ENCODE measurements at regions of chr19 and their contacts with region 1.

Region 1: DNA sequence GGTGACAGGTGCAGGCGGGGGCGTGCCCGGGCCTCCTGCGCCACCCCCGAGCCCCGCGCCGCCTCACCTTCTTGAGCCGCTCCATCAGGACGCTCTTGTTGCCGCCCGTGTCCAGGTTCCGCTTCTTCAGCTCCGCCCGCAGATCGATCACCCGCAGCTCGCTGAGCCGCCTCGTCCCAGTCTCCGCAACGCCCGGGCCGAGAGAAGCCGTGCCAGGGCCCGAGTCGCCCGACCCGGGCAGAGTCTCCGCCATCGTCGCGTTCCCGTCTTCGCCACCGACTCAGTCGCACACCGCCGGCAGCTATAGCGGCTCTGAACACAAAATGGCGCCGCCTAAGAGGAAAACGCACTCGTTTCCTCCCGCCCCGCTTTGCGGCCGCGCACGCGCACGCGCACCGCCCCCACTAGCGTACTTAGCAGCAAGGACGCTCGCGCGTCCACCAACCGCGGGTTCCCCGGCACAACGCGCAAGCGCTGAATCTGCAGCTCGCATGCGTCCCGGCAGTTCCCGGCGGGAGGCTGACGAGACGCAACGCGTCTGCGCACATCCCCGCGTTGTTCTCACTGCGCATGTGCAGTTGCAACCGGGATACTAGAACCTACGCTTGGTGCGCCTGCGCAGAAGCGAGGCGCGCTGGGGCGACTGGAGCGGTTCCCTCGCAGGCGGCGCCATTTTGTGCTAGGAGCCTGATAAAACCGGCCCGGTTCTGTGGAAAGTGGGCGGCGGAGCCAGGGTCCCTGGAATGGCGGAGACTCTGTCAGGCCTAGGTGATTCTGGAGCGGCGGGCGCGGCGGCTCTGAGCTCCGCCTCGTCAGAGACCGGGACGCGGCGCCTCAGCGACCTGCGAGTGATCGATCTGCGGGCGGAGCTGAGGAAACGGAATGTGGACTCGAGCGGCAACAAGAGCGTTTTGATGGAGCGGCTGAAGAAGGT is at the starts of genes SAFB and SAFB2:
- DNase-seq: peak; percentile 100
- H3K4me3 ChIP-seq: peak within 1 kb of the TSS; percentile 95
- H3K27ac ChIP-seq: peak within 1 kb of the TSS; percentile 80
- H3K4me1 ChIP-seq: peaks cover 52% of the 10 kb centered on the region
- CTCF ChIP-seq: no peak
- total RNA-seq, gene SAFB: 68.9 and 79.4 TPM in 2 replicates
- total RNA-seq, gene SAFB2: 51.7 and 52.8 TPM in 2 replicates

Region 2: GRCh38 chr19:5503598-5503997 is 119.1 kb before region 1 on chr19:
- CTCF ChIA-PET with region 1: no interaction called
- POLR2A ChIA-PET with region 1: no interaction called
- intact Hi-C with region 1: no loop called
- DNase-seq: no peak
- H3K4me3 ChIP-seq: no peak overlapping the region
- H3K27ac ChIP-seq: no peak overlapping the region
- H3K4me1 ChIP-seq: no peaks in the 10 kb centered on the region
- CTCF ChIP-seq: peak; percentile 35; the same call in 1 of the 2 replicates

Region 3: DNA sequence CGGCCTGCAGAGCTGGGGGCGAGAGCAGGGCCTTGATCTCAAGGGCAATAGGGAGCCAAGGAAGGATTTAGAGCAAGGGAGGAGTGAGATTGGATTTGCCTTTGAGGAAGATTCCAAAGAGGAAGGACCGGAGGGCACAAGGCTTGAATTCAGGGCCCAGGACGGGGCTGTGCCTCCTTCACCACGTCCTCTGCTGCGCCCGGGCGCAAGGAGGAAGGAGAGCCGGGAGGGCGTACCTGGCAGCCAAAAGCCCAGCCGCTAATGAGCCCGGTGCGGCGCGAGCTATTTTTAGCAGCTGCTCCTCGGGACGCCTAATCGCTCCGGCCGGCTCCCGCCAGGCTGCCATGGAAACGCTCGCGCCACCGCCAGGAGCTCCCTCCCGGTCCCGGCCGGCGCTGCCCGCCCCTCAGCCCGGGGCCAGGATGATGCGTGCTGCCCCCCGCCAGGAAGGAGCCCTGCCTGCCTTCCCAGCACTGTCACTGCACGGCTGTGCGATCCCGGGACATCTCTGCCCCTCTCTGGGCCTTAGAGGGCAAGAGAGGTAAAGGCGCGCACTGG is 86.3 kb before region 1 on chr19:
- CTCF ChIA-PET with region 1: no interaction called
- POLR2A ChIA-PET with region 1: no interaction called
- intact Hi-C with region 1: no loop called
- DNase-seq: no peak
- H3K4me3 ChIP-seq: no peak overlapping the region
- H3K27ac ChIP-seq: no peak overlapping the region
- H3K4me1 ChIP-seq: no peaks in the 10 kb centered on the region
- CTCF ChIP-seq: no peak

Region 4: GRCh38 chr19:5680437-5681368 is 58.0 kb after region 1 on chr19 and contains the starts of genes HSD11B1L and MICOS13:
- CTCF ChIA-PET with region 1: no interaction called
- POLR2A ChIA-PET with region 1: no interaction called
- intact Hi-C with region 1: loop called (anchors 2 kb)
- DNase-seq: peak; percentile 99
- H3K4me3 ChIP-seq: peak within 1 kb of the TSS; percentile 96
- H3K27ac ChIP-seq: peak within 1 kb of the TSS; percentile 56
- H3K4me1 ChIP-seq: peaks cover 12% of the 10 kb centered on the region
- CTCF ChIP-seq: no peak
- total RNA-seq, gene HSD11B1L: 2.1 and 4.6 TPM in 2 replicates
- total RNA-seq, gene MICOS13: 102 and 119 TPM in 2 replicates

Region 5: GRCh38 chr19:5690125-5690954 is 67.6 kb after region 1 on chr19 and contains the start of gene RPL36:
- CTCF ChIA-PET with region 1: no interaction called
- POLR2A ChIA-PET with region 1: interaction called, 4 read pairs
- intact Hi-C with region 1: loop called (anchors 2 kb)
- DNase-seq: peak; percentile 97
- H3K4me3 ChIP-seq: peak within 1 kb of the TSS; percentile 88
- H3K27ac ChIP-seq: peak within 1 kb of the TSS; percentile 73
- H3K4me1 ChIP-seq: peaks cover 18% of the 10 kb centered on the region
- CTCF ChIP-seq: peak; percentile 85
- total RNA-seq, gene RPL36: 1,836 and 1,936 TPM in 2 replicates

Region 6: GRCh38 chr19:5790573-5791520 is 168.1 kb after region 1 on chr19 and contains the start of gene DUS3L:
- CTCF ChIA-PET with region 1: no interaction called
- POLR2A ChIA-PET with region 1: no interaction called
- intact Hi-C with region 1: loop called (anchors 10 kb)
- DNase-seq: peak; percentile 99
- H3K4me3 ChIP-seq: peak within 1 kb of the TSS; percentile 78
- H3K27ac ChIP-seq: peak within 1 kb of the TSS; percentile 81
- H3K4me1 ChIP-seq: peaks cover 9% of the 10 kb centered on the region
- CTCF ChIP-seq: no peak
- total RNA-seq, gene DUS3L: 55.8 and 63.7 TPM in 2 replicates

Region 7: GRCh38 chr19:5977785-5978605 is 355.3 kb after region 1 on chr19 and contains the start of gene RANBP3:
- CTCF ChIA-PET with region 1: no interaction called
- POLR2A ChIA-PET with region 1: no interaction called
- intact Hi-C with region 1: loop called (anchors 10 kb)
- DNase-seq: peak; percentile 100
- H3K4me3 ChIP-seq: peak within 1 kb of the TSS; percentile 97
- H3K27ac ChIP-seq: peak within 1 kb of the TSS; percentile 73
- H3K4me1 ChIP-seq: peaks cover 47% of the 10 kb centered on the region
- CTCF ChIP-seq: no peak
- total RNA-seq, gene RANBP3: 63.7 and 74.3 TPM in 2 replicates